Naive thymus-derived CD4-positive, alpha-beta T cell (primary cell): ENCODE measurements at regions of chr3 and their contacts with region 1.

Region 1: DNA sequence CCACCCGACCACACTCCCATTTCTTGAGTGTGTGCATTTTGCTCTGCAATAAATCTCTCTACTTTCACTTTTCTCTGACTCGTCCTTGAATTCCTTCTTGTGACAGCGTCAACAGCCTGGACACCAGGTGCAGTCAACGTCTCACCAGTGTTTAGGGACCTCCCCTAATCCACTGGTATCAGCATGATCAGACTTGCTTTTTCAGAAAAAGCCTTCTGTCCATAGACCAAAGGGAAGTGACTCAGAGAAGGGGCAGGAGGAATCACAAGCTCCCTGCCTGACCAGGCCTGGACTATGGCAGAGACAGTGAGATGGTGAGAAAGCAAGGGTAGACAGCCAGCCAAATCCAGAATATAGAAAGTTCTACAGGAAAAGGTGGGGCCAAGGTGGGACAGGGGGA is 15.5 kb downstream of the CCR5 start:
- DNase-seq: no peak
- ATAC-seq: no peak
- H3K4me3 ChIP-seq: no peak overlapping the region
- H3K4me3 Mint-ChIP-seq: peak overlapping the region in 1 of 10 donors; percentile 53
- H3K27ac ChIP-seq: no peak overlapping the region
- H3K27ac Mint-ChIP-seq: peak overlapping the region in 1 of 9 donors; percentile 61
- H3K4me1 ChIP-seq: peaks cover 0 to 7% of the 10 kb centered on the region in 2 donors
- H3K4me1 Mint-ChIP-seq: peaks cover 13 to 28% (median 16%) of the 10 kb centered on the region in 7 donors
- H3K27me3 ChIP-seq: no peaks in the 10 kb centered on the region
- H3K27me3 Mint-ChIP-seq: peaks cover 0 to 12% (median 4%) of the 10 kb centered on the region in 5 donors

Region 2: DNA sequence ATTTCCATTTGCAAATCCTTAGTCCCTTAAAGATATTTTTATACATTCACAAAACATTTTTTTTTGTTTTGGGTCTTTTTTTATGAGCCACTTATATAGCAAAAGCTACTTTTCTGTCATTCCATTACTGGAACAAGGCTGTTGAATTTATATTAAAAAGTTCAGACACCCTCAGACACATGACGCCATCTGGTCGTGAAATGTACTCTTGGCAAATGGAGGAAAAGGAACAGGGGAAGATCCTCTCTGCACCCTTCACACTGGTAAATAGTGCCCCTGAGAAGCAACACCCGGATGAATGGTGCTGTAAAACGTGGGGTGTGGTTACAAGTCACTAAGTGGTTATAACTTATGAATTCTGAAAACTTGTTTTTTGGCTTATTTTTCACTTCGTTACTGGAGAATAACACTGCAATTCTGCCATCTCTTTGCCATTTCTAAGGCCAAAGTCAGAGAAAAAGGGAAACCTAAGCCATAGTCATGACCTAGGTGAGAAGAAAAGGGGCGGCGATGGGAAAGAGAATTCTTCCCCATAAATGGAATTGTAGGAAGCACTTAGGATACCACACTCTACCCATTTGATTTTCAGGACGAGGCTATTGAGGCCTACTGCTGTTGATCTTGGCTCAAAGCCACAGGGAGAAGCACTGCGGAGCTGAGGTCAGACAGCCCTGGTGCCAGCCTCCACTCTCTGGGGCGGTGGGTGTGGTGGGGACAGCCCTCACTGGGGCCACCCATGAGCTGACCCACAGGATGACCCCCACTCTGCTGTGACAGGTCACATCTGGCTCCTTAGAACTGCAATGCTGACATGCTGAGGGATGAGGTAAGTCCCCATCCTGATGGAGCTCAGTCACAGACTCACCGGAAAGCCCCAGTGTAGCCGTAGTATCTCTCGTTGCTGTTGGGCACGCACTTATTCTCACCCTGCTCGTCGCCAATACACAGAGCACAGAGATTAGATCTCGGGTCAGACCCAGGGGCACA is 56.7 kb after region 1 on chr3:
- CTCF ChIA-PET with region 1: no interaction called
- POLR2A ChIA-PET with region 1: no interaction called
- intact Hi-C with region 1: loop called in 1 of 2 experiments (anchors 10 kb)
- DNase-seq: peak in 2 of 9 donors; percentile 35 to 43
- ATAC-seq: peak; percentile 56
- H3K4me3 ChIP-seq: no peak overlapping the region
- H3K4me3 Mint-ChIP-seq: no peak overlapping the region
- H3K27ac ChIP-seq: no peak overlapping the region
- H3K27ac Mint-ChIP-seq: peak overlapping the region in 1 of 9 donors; percentile 58
- H3K4me1 ChIP-seq: peaks cover 12 to 13% of the 10 kb centered on the region in 2 donors
- H3K4me1 Mint-ChIP-seq: peaks cover 15 to 36% (median 27%) of the 10 kb centered on the region in 7 donors
- H3K27me3 ChIP-seq: no peaks in the 10 kb centered on the region
- H3K27me3 Mint-ChIP-seq: peaks cover 0 to 8% (median 0%) of the 10 kb centered on the region in 5 donors